Heart left ventricle (tissue), 16 donors: ENCODE measurements at regions of chr3 and their contacts with region 1.

Region 1: DNA sequence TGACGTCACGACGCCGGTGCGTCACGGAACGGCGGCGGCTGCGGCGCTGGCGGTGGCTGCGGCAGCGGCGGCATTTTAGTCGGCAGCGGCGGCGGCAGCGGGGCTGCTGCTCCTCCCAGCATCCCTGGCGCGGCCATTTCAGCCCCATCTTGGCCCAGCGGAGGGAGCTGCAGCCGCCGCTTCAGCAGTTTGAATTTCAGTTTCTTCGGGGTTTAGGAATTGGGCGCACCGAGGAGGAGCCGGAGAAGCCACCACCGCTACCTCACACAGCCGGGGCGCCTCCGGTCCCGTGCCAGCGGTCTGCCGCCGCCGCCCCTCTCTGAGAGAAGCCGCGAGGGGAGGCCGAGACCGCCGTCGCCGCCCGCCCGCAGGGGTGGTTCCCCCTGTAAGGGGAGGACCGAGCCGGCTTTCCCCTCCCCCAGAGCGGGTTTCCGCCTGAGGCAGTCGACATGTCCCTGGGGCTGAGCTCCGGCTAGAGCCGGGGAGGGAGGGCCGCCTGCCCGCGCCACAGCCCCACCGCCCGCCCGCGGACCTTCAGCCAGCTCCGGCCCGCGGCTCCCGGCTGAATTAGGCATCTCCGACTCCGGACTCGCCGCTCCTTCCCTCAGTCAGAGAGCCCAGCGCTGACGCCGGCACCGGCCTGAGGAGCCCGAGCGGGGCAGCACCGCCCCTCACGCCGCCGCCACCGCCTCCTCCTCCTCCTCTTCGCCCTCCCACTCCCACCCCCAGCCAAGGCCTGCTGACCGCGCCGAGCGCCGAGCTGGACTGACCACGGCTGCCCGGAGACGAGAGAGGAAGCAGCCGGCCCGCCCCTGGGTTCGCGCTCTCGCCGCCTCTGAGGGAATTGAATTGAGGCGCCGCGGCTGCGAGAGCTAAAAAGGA is at the start of gene TSC22D2:
- DNase-seq: peak; percentile 96 to 98 (median 96)
- ATAC-seq: peak; percentile 72 to 89 (median 85)
- H3K4me3 ChIP-seq: peak within 1 kb of the TSS; percentile 71 to 92 (median 86)
- H3K27ac ChIP-seq: peak within 1 kb of the TSS; percentile 96 to 100 (median 99)
- H3K4me1 ChIP-seq: peaks cover 0 to 32% (median 10%) of the 10 kb centered on the region in 12 donors
- H3K27me3 ChIP-seq: no peaks in the 10 kb centered on the region
- CTCF ChIP-seq: peak in 5 of 12 donors; percentile 14 to 43 (median 23)
- POLR2A ChIP-seq: peak; percentile 98 to 99
- total RNA-seq, gene TSC22D2: 12.7 to 55.8 (median 32.6) TPM

Region 2: GRCh38 chr3:150227839-150228238 is 180.6 kb before region 1 on chr3:
- intact Hi-C with region 1: loop called in 7 of 10 experiments (anchors 2 to 10 kb)
- DNase-seq: peak in 4 of 5 donors; percentile 25 to 43 (median 35)
- ATAC-seq: peak in 3 of 4 donors; percentile 17 to 59 (median 28)
- H3K4me3 ChIP-seq: no peak overlapping the region
- H3K27ac ChIP-seq: no peak overlapping the region
- H3K4me1 ChIP-seq: peaks cover 0 to 20% (median 2%) of the 10 kb centered on the region in 12 donors
- H3K27me3 ChIP-seq: peaks cover 0 to 6% (median 0%) of the 10 kb centered on the region in 9 donors
- CTCF ChIP-seq: peak; percentile 44 to 69 (median 57)
- POLR2A ChIP-seq: no peak

Region 3: GRCh38 chr3:150238998-150239619 is 169.4 kb before region 1 on chr3:
- intact Hi-C with region 1: loop called in 2 of 10 experiments (anchors 5 to 10 kb)
- DNase-seq: no peak
- ATAC-seq: peak in 1 of 4 donors; percentile 23
- H3K4me3 ChIP-seq: no peak overlapping the region
- H3K27ac ChIP-seq: no peak overlapping the region
- H3K4me1 ChIP-seq: peaks cover 0 to 35% (median 8%) of the 10 kb centered on the region in 12 donors
- H3K27me3 ChIP-seq: no peaks in the 10 kb centered on the region
- CTCF ChIP-seq: peak in 8 of 12 donors; percentile 22 to 47 (median 35)
- POLR2A ChIP-seq: no peak

Region 4: DNA sequence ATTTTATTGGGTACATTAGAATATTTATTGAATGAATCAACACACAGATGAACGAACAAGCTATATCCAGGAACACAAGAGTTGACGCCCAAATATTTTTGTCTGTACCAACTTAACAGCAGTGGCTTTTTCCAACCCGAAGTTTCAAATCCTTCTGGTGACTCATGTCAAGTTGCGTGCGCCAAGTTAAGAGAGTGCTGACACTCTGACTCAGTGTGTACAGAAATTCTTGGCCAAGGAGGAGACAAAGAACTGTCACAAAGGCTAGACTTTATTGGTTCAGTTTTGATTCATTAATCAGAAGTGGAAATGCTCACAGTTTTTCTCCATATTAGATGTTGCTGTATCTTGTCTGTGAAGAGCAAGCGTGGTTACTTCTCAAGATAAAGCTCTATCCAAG is 60.0 kb before region 1 on chr3:
- intact Hi-C with region 1: loop called in 2 of 10 experiments (anchors 1 to 2 kb)
- DNase-seq: peak in 1 of 5 donors; percentile 31
- ATAC-seq: peak; percentile 75 to 93 (median 82)
- H3K4me3 ChIP-seq: no peak overlapping the region
- H3K27ac ChIP-seq: peak overlapping the region; percentile 5 to 85 (median 74)
- H3K4me1 ChIP-seq: peaks cover 0 to 48% (median 9%) of the 10 kb centered on the region in 12 donors
- H3K27me3 ChIP-seq: no peaks in the 10 kb centered on the region
- CTCF ChIP-seq: no peak
- POLR2A ChIP-seq: no peak

Region 5: DNA sequence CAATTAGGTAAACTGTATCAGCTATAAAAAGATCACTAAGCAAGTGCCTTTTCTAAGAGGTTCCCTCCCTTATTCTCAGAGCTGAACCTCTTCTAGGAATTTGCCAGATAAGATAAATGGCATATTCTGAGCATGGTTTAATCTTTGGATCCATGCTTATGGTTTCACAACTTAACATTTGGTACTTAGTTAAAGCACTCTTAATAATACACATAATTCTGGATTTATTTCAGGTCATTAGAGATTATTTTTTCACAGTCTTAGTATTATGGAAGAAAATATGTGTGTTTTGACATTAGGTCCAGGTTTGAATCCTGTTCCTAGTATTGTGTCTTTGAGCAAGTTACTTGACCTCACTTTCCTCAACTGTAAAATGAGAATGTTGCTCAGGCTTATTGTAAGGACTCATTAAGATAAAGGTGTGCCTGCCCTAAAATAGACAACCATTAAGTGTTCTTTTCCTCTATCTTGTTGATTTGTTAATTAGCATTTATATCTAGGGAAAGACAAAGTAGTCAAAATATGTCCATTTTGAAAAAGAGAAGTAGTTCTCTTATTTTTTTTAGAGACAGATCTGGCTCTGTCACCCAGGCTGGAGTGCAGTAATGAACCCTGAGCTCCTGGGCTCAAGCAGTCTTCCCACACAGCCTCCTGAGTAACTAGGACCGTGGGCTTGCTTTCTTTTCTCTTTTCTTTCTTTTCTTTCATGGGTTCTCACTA is 43.0 kb after region 1 on chr3:
- intact Hi-C with region 1: loop called in 2 of 10 experiments (anchors 5 kb)
- DNase-seq: no peak
- ATAC-seq: peak in 1 of 4 donors; percentile 41
- H3K4me3 ChIP-seq: no peak overlapping the region
- H3K27ac ChIP-seq: peak overlapping the region in 3 of 12 donors; percentile 4 to 28 (median 16)
- H3K4me1 ChIP-seq: peaks cover 7 to 73% (median 40%) of the 10 kb centered on the region in 12 donors
- H3K27me3 ChIP-seq: no peaks in the 10 kb centered on the region
- CTCF ChIP-seq: no peak
- POLR2A ChIP-seq: no peak

Region 6: GRCh38 chr3:150469031-150469942 is 60.8 kb after region 1 on chr3:
- intact Hi-C with region 1: no loop called
- DNase-seq: peak in 1 of 5 donors; percentile 69
- ATAC-seq: peak in 3 of 4 donors; percentile 64 to 94 (median 83)
- H3K4me3 ChIP-seq: no peak overlapping the region
- H3K27ac ChIP-seq: peak overlapping the region in 1 of 12 donors; percentile 46
- H3K4me1 ChIP-seq: peaks cover 0 to 11% (median 0%) of the 10 kb centered on the region in 12 donors
- H3K27me3 ChIP-seq: no peaks in the 10 kb centered on the region
- CTCF ChIP-seq: no peak
- POLR2A ChIP-seq: no peak

Region 7: DNA sequence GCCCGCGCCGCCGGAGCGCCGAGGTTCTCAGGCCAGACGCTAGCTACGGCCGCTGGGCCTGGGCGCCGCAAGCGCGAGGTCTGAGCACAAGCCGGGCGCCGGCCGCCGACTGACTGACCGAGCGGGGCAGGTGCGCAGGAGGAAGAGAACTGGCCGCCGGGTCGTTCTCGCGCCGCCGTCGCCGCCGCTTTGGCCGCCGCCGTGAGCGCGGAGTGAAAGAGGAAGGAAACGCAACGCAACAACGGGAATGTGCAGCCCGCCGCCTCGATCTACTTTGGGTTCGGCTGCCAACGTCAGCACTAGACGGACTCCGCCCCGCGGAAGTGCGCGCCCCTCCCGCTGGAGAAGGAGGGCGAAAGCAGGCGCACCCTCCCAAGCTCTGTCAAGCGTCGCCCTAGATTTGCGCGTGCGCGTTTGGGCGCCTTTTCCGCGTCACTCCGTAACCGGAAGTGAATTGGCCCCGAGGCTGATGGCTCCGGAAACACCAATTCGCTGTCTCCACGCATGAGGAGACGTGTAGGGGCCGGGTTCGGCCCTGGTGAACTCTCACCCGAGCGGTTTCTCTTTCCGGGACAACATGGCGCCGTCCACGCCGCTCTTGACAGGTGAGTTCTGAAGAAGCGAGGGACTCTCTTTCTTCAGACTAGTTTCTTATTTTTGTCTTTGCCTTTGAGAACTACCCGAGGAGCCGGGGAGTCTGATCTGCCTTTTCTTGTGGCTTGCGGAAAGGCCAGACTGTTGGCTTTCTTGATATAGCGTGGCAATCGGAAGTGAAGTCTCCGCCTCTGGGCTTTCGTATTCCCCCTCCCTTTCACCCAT is 138.0 kb after region 1 on chr3 and contains the starts of genes EIF2A and SERP1:
- intact Hi-C with region 1: loop called in 3 of 10 experiments (anchors 2 kb)
- DNase-seq: peak; percentile 98 to 100 (median 99)
- ATAC-seq: peak; percentile 97 to 98 (median 98)
- H3K4me3 ChIP-seq: peak within 1 kb of the TSS; percentile 80 to 98 (median 86)
- H3K27ac ChIP-seq: peak within 1 kb of the TSS; percentile 91 to 99 (median 98)
- H3K4me1 ChIP-seq: peaks cover 0 to 55% (median 28%) of the 10 kb centered on the region in 12 donors
- H3K27me3 ChIP-seq: no peaks in the 10 kb centered on the region
- CTCF ChIP-seq: peak in 2 of 12 donors; percentile 1 to 5
- POLR2A ChIP-seq: peak; percentile 48 to 95
- total RNA-seq, gene EIF2A: 60.5 to 112 (median 75.5) TPM
- total RNA-seq, gene SERP1: 19.5 to 86.9 (median 26.3) TPM